ENCODE measurements at regions of chr1 and their contacts with region 1.

Region 1: DNA sequence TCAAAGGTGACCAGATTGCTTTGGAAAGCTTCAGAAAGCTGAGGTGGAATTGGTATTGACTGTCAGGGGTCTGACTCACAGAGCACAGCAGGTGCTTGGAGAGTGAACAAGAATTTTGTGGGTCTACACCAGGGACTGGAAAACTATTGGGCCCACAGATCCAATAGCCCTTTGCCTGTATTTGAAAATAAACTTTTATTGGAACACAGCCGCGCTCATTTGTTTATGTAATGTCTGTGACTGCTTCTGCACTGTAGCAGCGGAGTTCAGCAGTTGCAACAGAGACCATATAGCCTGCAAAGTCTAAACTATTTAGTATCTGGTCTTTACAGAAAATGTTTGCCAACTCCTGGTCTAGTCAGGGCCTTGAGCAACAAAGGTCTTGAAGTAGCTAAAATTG is 315.6 kb downstream of the NFIA start:
- DNase-seq: no peak
- ATAC-seq: no peak
- H3K4me3 ChIP-seq: no peak overlapping the region
- H3K27ac ChIP-seq: no peak overlapping the region
- H3K4me1 ChIP-seq: peaks cover 0 to 27% (median 10%) of the 10 kb centered on the region in 9 donors
- H3K27me3 ChIP-seq: no peaks in the 10 kb centered on the region
- CTCF ChIP-seq: no peak

Region 2: GRCh38 chr1:61141288-61142042 is 256.5 kb before region 1 on chr1:
- intact Hi-C with region 1: no loop called
- DNase-seq: no peak
- ATAC-seq: peak in 2 of 8 donors; percentile 22 to 34
- H3K4me3 ChIP-seq: no peak overlapping the region
- H3K27ac ChIP-seq: peak overlapping the region in 6 of 10 donors; percentile 11 to 69 (median 32)
- H3K4me1 ChIP-seq: peaks cover 9 to 65% (median 55%) of the 10 kb centered on the region in 9 donors
- H3K27me3 ChIP-seq: no peaks in the 10 kb centered on the region
- CTCF ChIP-seq: no peak

Region 3: DNA sequence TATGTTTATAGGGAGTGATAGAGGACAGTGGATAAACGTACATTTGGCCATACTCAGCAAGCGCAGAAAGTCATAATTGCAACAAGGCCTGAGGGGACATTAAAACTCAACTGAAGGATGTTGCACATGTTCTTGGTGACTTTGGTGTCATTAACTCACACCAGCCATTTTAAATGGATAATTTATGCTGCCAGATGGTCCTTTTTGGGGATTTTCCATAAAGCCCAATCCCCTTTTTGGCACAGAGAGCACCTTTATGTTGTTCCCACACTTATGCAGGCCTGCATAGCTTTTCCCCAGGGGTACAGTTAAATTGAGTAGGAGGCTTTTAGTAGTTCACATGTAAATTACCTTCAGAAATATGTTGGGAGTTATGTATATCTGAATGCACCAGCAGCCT is 36.0 kb before region 1 on chr1:
- intact Hi-C with region 1: loop called in 2 of 10 experiments (anchors 1 to 2 kb)
- DNase-seq: no peak
- ATAC-seq: no peak
- H3K4me3 ChIP-seq: no peak overlapping the region
- H3K27ac ChIP-seq: peak overlapping the region in 4 of 10 donors; percentile 1 to 51 (median 18)
- H3K4me1 ChIP-seq: peaks cover 0 to 35% (median 18%) of the 10 kb centered on the region in 9 donors
- H3K27me3 ChIP-seq: no peaks in the 10 kb centered on the region
- CTCF ChIP-seq: no peak

Region 4: GRCh38 chr1:61368876-61369275 is 29.1 kb before region 1 on chr1:
- intact Hi-C with region 1: loop called in 1 of 10 experiments (anchors 2 kb)
- DNase-seq: no peak
- ATAC-seq: peak in 7 of 8 donors; percentile 46 to 93 (median 87)
- H3K4me3 ChIP-seq: peak overlapping the region in 2 of 10 donors; percentile 11 to 20
- H3K27ac ChIP-seq: peak overlapping the region in 6 of 10 donors; percentile 3 to 59 (median 31)
- H3K4me1 ChIP-seq: peaks cover 0 to 15% (median 5%) of the 10 kb centered on the region in 9 donors
- H3K27me3 ChIP-seq: no peaks in the 10 kb centered on the region
- CTCF ChIP-seq: no peak

Region 5: GRCh38 chr1:61504852-61505390 is 107.0 kb after region 1 on chr1:
- intact Hi-C with region 1: no loop called
- DNase-seq: no peak
- ATAC-seq: no peak
- H3K4me3 ChIP-seq: no peak overlapping the region
- H3K27ac ChIP-seq: no peak overlapping the region
- H3K4me1 ChIP-seq: no peaks in the 10 kb centered on the region
- H3K27me3 ChIP-seq: no peaks in the 10 kb centered on the region
- CTCF ChIP-seq: no peak

Region 6: DNA sequence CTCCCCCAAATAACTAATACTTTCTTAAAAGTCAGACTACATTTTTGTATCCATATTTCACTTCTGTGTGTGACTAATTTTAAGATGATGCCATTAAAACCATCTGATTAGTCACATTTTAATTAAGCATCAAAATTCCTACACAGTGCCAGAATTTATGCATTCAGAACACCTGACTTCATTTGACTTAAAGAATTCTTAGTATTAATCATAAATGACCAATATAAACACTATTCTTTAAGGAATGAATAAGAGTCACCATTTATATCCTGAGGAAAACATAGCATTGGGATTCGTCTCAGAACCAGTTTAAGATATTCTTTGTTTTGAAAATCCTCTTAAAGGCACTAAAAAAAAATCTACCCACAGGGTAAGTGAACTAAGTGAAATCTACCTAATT is 290.0 kb after region 1 on chr1:
- intact Hi-C with region 1: no loop called
- DNase-seq: no peak
- ATAC-seq: no peak
- H3K4me3 ChIP-seq: no peak overlapping the region
- H3K27ac ChIP-seq: no peak overlapping the region
- H3K4me1 ChIP-seq: no peaks in the 10 kb centered on the region
- H3K27me3 ChIP-seq: no peaks in the 10 kb centered on the region
- CTCF ChIP-seq: no peak